IMR-90 (cell line): ENCODE measurements at regions of chr18 and their contacts with region 1.

Region 1: DNA sequence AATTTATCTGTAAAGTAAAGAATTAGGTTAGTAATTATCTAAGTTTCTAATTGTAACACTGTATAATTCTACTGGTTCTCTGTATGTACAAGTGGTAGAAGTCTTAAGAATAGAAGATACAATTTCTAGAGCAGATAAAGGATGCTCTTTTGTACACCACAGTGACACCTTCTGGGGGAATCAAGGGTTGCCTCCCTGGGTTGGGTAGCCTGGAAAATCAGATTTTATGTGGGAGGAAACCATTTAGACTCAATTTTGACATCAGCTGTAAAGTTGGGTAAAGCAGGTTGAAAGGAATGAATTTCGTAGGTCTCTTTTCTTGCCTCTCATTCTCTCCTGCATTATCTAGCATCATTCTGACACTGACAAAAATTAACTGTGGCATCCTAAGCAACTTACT is 354.8 kb downstream of the DCC start:
- DNase-seq: no peak
- ATAC-seq: peak; percentile 46
- H3K4me3 ChIP-seq: no peak overlapping the region
- H3K27ac ChIP-seq: no peak overlapping the region
- H3K4me1 ChIP-seq: no peaks in the 10 kb centered on the region
- H3K27me3 ChIP-seq: no peaks in the 10 kb centered on the region
- CTCF ChIP-seq: peak; percentile 38
- POLR2A ChIP-seq: no peak
- RAD21 ChIP-seq: peak; percentile 35; the same call in 1 of the 2 replicates

Region 2: DNA sequence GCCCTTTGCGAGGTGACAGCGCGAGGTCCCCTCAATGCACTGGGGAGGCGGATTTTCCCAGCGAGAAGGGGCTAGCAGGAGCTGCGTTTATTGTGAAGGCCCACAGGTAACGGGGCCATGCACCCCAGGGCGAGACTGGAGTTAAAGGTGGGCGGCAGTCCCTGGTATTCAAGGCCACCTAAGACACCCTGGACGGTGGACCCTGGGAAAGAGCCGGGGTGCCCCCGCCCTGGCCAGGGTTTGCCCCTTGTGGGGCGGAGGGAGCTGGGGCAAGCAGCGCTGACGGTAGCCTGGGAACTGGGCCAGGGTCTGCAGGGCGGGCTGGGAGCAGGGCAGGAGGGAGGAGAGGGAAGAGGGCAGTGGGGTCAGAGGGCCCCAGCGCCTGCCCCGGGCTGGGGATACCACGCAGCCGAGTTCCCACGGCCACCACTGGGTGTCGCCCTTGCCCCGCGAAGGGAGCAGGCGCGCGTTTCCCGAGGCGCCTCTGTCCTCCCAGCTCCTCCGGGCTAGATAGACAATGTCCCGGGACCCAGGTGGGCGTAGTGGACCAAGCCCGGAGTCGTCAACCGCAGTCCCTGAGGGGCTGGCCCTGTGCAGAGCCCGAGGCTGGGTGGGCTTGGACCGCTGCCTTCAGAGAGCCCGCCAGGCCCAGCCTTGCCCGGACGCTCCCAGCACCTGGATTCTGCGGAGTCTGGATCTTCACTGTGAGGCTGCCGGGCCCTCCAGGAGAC is 1584.6 kb before region 1 on chr18:
- CTCF ChIA-PET with region 1: no interaction called
- POLR2A ChIA-PET with region 1: no interaction called
- dilution Hi-C with region 1: no loop called
- in situ Hi-C with region 1: loop called (anchors 25 kb)
- intact Hi-C with region 1: no loop called
- DNase-seq: peak; percentile 5
- ATAC-seq: peak; percentile 100
- H3K4me3 ChIP-seq: no peak overlapping the region
- H3K27ac ChIP-seq: no peak overlapping the region
- H3K4me1 ChIP-seq: no peaks in the 10 kb centered on the region; the same call in 1 of the 2 replicates
- H3K27me3 ChIP-seq: no peaks in the 10 kb centered on the region
- CTCF ChIP-seq: peak; percentile 87
- POLR2A ChIP-seq: peak; percentile 34; the same call in 1 of the 2 replicates
- RAD21 ChIP-seq: peak; percentile 96

Region 3: DNA sequence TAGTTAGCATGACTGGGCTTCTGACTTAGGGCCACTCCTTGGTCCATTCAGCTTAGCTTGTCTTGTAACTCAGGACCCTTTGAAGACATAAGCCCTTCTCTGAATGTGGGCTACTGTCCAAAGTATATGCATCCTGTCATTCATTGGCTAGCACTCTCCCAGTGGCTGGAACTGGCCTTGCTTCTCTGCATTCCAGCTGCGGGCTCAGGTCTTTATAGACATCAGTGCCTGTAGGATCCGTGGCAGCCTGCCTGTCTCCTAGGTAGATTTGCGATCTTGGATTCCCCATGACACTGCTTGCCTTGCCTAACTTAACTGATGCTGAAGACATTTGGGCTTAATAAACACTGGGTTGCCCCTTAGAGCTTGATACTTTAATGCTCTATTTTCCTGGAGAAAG is 184.7 kb before region 1 on chr18:
- CTCF ChIA-PET with region 1: no interaction called
- POLR2A ChIA-PET with region 1: no interaction called
- dilution Hi-C with region 1: no loop called
- in situ Hi-C with region 1: no loop called
- intact Hi-C with region 1: no loop called
- DNase-seq: no peak
- ATAC-seq: no peak
- H3K4me3 ChIP-seq: no peak overlapping the region
- H3K27ac ChIP-seq: no peak overlapping the region
- H3K4me1 ChIP-seq: no peaks in the 10 kb centered on the region
- H3K27me3 ChIP-seq: no peaks in the 10 kb centered on the region
- CTCF ChIP-seq: no peak
- POLR2A ChIP-seq: no peak
- RAD21 ChIP-seq: no peak

Region 4: DNA sequence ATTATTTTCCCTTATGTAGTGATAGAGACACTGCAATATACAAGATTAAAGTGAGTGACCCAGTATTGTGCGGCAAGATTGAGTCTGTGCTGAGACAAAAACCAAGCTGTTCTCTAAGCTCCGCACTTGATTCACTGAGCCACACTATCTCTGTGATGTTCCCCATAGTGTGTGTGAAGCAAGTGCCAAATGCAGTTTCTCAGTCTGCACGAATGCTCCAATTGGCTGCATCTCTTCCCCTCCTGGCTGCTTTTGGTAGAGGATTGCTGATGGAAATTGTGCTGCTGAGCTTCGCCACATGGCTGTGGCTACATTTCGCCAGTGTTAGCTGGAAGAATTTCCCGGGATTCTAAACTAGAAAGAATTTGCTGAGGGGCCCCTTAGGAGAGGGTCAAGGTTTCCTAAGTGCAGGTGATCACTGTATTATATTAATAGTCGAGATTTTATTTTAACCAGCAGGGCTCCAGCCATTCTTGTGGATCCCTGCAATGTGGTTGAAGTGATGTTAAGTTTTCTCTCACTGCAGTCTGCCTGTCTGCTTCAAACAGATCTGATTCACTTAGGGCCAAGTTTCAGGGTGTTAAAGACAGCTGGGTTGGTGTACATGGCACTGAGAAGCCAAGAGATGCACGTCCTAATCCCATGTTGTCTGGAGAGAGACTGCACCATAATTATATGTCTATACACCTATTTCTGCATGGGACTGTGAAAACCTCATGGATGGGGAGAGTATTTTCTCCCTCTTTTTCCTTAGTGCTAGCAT is 37.6 kb before region 1 on chr18:
- CTCF ChIA-PET with region 1: no interaction called
- POLR2A ChIA-PET with region 1: no interaction called
- dilution Hi-C with region 1: no loop called
- in situ Hi-C with region 1: no loop called
- intact Hi-C with region 1: no loop called
- DNase-seq: no peak
- ATAC-seq: no peak
- H3K4me3 ChIP-seq: no peak overlapping the region
- H3K27ac ChIP-seq: no peak overlapping the region
- H3K4me1 ChIP-seq: no peaks in the 10 kb centered on the region
- H3K27me3 ChIP-seq: no peaks in the 10 kb centered on the region
- CTCF ChIP-seq: no peak
- POLR2A ChIP-seq: no peak
- RAD21 ChIP-seq: no peak